Activated CD4-positive, alpha-beta memory T cell treated with anti-CD3 and anti-CD28 coated beads for 36 hours (primary cell): ENCODE measurements at regions of chr2 and their contacts with region 1.

Region 1: DNA sequence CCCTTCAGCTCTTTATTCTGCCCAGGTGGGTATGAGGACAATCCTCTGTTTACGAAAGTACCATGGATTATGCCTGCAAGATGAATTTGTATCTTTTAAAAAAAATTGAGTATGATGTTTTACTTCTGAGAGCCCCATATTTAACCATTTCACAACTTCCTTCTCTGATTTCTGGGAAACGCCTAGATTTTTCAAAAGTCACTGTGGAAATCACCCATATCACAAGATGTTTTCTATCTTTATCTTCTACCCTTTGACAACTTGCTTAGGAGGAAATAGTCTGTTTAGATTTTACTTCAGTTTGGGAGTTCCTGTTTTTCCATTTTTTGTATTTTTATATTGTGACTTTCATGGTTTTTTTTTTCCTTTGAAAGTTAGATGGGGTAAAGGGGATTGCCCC is 53.0 kb downstream of the ICOS start:
- DNase-seq: no peak
- H3K4me3 Mint-ChIP-seq: peak overlapping the region; percentile 18
- H3K27ac Mint-ChIP-seq: peak overlapping the region; percentile 86
- H3K4me1 Mint-ChIP-seq: peaks cover 35% of the 10 kb centered on the region
- H3K27me3 Mint-ChIP-seq: no peaks in the 10 kb centered on the region

Region 2: GRCh38 chr2:203893401-203893800 is 96.1 kb before region 1 on chr2:
- CTCF ChIA-PET with region 1: no interaction called
- POLR2A ChIA-PET with region 1: no interaction called
- intact Hi-C with region 1: loop called (anchors 1 kb)
- DNase-seq: no peak
- H3K4me3 Mint-ChIP-seq: peak overlapping the region; percentile 14
- H3K27ac Mint-ChIP-seq: peak overlapping the region; percentile 84
- H3K4me1 Mint-ChIP-seq: peaks cover 77% of the 10 kb centered on the region
- H3K27me3 Mint-ChIP-seq: no peaks in the 10 kb centered on the region

Region 3: GRCh38 chr2:203949228-203949627 is 40.3 kb before region 1 on chr2:
- CTCF ChIA-PET with region 1: interaction called, 4 read pairs
- POLR2A ChIA-PET with region 1: interaction called, 6 read pairs
- intact Hi-C with region 1: loop called (anchors 2 kb)
- DNase-seq: no peak
- H3K4me3 Mint-ChIP-seq: peak overlapping the region; percentile 65
- H3K27ac Mint-ChIP-seq: peak overlapping the region; percentile 89
- H3K4me1 Mint-ChIP-seq: peaks cover 87% of the 10 kb centered on the region
- H3K27me3 Mint-ChIP-seq: no peaks in the 10 kb centered on the region

Region 4: DNA sequence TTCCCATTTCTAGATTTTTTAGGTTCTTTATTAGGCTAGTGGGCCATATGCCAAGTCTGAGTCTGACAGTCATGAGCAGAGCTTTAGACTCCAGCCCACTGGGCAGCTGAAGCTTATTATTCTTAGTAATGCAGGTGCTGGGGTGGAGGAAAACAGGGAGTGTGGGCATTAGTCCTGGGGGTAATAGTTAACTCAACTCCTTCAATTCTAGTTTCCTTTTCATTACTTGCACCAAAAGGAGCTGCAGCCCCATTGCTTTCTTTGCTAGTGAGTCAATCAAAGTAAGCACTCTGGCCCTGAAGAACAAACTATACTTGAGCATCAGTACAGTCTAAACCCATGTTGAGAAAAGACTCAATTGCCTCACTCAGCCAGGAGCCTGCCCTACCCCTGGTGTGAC is 17.5 kb before region 1 on chr2:
- CTCF ChIA-PET with region 1: interaction called, 3 read pairs
- POLR2A ChIA-PET with region 1: interaction called, 16 read pairs
- intact Hi-C with region 1: loop called (anchors 1 kb)
- DNase-seq: no peak
- H3K4me3 Mint-ChIP-seq: no peak overlapping the region
- H3K27ac Mint-ChIP-seq: no peak overlapping the region
- H3K4me1 Mint-ChIP-seq: peaks cover 26% of the 10 kb centered on the region
- H3K27me3 Mint-ChIP-seq: no peaks in the 10 kb centered on the region

Region 5: DNA sequence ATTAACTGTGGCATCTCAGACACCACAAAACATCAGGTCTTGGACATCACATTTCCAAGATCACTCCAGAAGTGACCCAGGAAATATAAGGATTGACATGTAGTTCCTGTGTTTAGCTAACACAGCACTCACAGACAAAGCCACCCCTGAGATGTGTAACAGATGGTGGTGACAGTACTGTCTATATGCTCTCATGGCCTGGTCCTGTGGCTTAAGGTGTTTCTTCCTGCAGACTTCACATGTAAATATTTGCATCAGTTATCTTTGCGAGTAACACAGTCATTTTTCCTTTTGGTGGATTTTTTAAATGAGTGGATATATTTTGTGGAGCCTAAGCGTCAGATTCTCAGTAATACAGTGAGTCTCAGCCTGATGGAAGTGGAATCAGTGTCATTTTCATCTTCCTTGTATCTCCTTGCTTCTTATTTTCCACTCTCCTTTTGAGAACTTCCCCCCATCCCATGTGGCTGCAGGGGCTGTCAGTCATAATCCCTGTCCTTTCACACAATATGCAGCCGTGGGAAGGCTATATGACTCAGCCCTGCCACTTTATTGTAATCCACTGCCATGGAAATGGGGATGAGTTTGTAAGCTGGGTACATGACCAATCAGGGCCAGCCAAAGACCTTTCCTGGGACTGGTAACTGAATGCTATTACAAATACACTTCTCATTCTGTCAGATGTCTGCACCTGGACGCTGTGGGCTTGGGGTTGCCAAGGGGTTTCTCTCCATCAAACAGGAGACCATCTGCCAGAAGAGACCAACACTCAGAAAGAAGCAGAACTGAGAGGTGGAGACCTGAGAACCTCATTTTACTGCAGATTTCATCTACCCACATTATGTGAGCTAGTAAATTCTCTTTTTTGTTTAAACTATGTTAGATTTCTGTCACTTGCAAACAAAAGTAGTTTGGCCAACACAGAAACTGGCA is 21.4 kb after region 1 on chr2:
- CTCF ChIA-PET with region 1: interaction called, 4 read pairs
- POLR2A ChIA-PET with region 1: interaction called, 15 read pairs
- intact Hi-C with region 1: loop called (anchors 1 kb)
- DNase-seq: peak; percentile 49
- H3K4me3 Mint-ChIP-seq: peak overlapping the region; percentile 56
- H3K27ac Mint-ChIP-seq: peak overlapping the region; percentile 78
- H3K4me1 Mint-ChIP-seq: peaks cover 87% of the 10 kb centered on the region
- H3K27me3 Mint-ChIP-seq: no peaks in the 10 kb centered on the region